ENCODE measurements at regions of chr7 and their contacts with region 1.

Region 1: DNA sequence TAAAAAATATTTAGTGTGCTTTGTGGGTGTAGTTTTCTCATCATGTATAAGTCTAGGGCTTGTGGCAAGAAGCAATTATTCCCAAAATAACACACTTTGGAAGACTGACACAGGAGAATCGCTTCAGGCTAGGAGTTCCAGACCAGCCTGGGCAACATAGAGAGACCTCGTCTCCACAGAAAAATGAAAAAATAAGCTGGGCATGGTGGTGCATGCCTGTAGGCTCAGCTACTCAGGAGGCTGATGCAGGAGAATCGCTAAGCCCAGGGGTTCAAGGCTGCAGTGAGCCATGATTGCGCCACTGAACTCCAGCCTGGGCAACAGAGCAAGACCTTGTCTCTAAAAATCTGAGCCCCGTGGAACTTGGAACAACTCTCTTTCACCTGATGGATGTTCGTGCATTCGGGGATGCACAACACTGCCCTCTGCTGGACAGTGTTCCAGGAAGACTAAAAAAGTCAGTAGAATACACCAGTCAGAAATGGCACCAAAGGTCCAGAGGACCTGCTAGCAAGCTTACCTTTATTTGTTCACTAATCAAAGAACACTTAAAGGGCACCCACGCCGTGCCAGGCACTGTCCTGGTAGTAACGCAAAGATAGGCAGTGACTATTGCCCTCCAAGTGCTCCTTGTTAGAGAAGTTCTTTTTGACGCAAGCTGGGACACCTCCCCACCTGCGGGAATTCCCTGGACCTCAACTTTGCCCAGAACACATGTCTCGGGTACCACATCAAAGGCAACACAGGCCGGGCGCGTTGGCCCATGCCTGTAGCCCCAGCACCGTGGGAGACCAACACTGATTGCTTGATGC is 81.9 kb upstream of the CALN1 start:
- H3K4me3 ChIP-seq: no peak overlapping the region
- H3K27ac ChIP-seq: no peak overlapping the region
- H3K4me1 ChIP-seq: no peaks in the 10 kb centered on the region
- CTCF ChIP-seq: no peak

Region 2: GRCh38 chr7:72504061-72504706 is 10.1 kb after region 1 on chr7:
- CTCF ChIA-PET with region 1: interaction called, 15 read pairs
- POLR2A ChIA-PET with region 1: interaction called, 7 read pairs
- H3K4me3 ChIP-seq: no peak overlapping the region
- H3K27ac ChIP-seq: no peak overlapping the region
- H3K4me1 ChIP-seq: no peaks in the 10 kb centered on the region
- CTCF ChIP-seq: no peak

Region 3: GRCh38 chr7:72924733-72925545 is 430.9 kb after region 1 on chr7 and contains the start of gene POM121:
- CTCF ChIA-PET with region 1: no interaction called
- POLR2A ChIA-PET with region 1: no interaction called
- H3K4me3 ChIP-seq: peak within 1 kb of the TSS; percentile 82
- H3K27ac ChIP-seq: peak within 1 kb of the TSS; percentile 51
- H3K4me1 ChIP-seq: peaks cover 4% of the 10 kb centered on the region; the same call in 1 of the 2 replicates
- CTCF ChIP-seq: no peak